ENCODE measurements at regions of chr12 and their contacts with region 1.

Region 1: GRCh38 chr12:133080368-133081158 is at the start of gene ZNF140:
- H3K4me3 Mint-ChIP-seq: no peak within 1 kb of the TSS
- H3K27ac Mint-ChIP-seq: no peak within 1 kb of the TSS
- H3K4me1 Mint-ChIP-seq: peaks cover 7% of the 10 kb centered on the region
- H3K27me3 Mint-ChIP-seq: no peaks in the 10 kb centered on the region

Region 2: DNA sequence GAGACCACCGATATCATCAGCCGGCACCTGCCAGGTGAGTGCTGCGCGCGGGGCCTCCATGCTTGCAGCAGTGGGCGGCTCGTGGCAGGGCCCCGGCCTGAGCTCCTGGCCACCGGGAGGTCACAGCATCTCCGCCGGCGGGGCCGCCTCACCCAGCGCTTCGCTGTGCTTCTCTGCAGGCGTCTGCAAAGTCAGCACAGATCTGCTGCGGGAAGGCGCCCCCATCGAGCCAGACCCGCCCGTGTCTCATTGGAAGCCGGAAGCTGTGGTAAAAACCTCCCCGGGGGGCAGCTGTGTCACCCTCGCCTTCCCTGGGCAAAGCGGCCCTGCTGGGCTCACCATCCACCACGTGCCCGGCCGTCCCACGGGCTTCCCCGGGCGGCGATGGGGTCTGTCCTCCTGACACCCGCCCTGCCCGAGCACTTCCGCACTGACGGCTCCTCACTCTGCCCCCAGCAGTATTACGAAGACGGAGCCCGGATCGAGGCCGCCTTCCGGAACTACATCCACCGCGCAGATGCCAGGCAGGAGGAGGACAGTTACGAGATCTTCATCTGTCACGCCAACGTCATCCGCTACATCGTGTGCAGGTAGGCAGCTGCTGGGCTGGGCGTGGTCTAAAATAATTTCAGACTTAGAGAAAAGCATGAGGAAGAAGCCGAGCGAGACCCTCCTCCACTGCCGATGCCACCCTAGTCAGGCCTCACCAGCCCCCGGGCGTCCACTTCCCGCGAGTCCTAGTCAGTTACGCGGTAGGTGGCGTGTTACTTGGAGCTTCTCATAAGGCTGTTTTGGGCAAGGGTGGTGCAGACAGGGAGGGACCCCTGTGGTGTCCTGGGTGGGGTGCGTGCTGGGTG is 362.8 kb before region 1 on chr12:
- intact Hi-C with region 1: no loop called
- H3K4me3 Mint-ChIP-seq: no peak overlapping the region
- H3K27ac Mint-ChIP-seq: no peak overlapping the region
- H3K4me1 Mint-ChIP-seq: peaks cover 8% of the 10 kb centered on the region
- H3K27me3 Mint-ChIP-seq: no peaks in the 10 kb centered on the region

Region 3: GRCh38 chr12:132887513-132888351 is 192.8 kb before region 1 on chr12 and contains the start of gene CHFR:
- intact Hi-C with region 1: loop called (anchors 1 kb)
- H3K4me3 Mint-ChIP-seq: peak within 1 kb of the TSS; percentile 91
- H3K27ac Mint-ChIP-seq: peak within 1 kb of the TSS; percentile 100
- H3K4me1 Mint-ChIP-seq: peaks cover 19% of the 10 kb centered on the region
- H3K27me3 Mint-ChIP-seq: peaks cover 15% of the 10 kb centered on the region

Region 4: GRCh38 chr12:132956011-132956788 is 124.4 kb before region 1 on chr12 and contains the start of gene ZNF605:
- intact Hi-C with region 1: loop called (anchors 1 kb)
- H3K4me3 Mint-ChIP-seq: peak within 1 kb of the TSS; percentile 86
- H3K27ac Mint-ChIP-seq: peak within 1 kb of the TSS; percentile 88
- H3K4me1 Mint-ChIP-seq: peaks cover 17% of the 10 kb centered on the region
- H3K27me3 Mint-ChIP-seq: no peaks in the 10 kb centered on the region

Region 5: GRCh38 chr12:132986001-132986912 is 94.3 kb before region 1 on chr12 and contains the start of gene ZNF26:
- intact Hi-C with region 1: loop called (anchors 1 kb)
- H3K4me3 Mint-ChIP-seq: peak within 1 kb of the TSS; percentile 89
- H3K27ac Mint-ChIP-seq: peak within 1 kb of the TSS; percentile 95
- H3K4me1 Mint-ChIP-seq: peaks cover 16% of the 10 kb centered on the region
- H3K27me3 Mint-ChIP-seq: no peaks in the 10 kb centered on the region

Region 6: GRCh38 chr12:133037207-133038005 is 43.2 kb before region 1 on chr12 and contains the start of gene ZNF84:
- intact Hi-C with region 1: loop called (anchors 1 kb)
- H3K4me3 Mint-ChIP-seq: peak within 1 kb of the TSS; percentile 90
- H3K27ac Mint-ChIP-seq: peak within 1 kb of the TSS; percentile 95
- H3K4me1 Mint-ChIP-seq: peaks cover 6% of the 10 kb centered on the region
- H3K27me3 Mint-ChIP-seq: no peaks in the 10 kb centered on the region

Region 7: GRCh38 chr12:133130038-133130807 is 49.7 kb after region 1 on chr12 and contains the starts of genes ZNF10 and ZNF891:
- intact Hi-C with region 1: loop called (anchors 1 kb)
- H3K4me3 Mint-ChIP-seq: peak within 1 kb of the TSS; percentile 92
- H3K27ac Mint-ChIP-seq: peak within 1 kb of the TSS; percentile 93
- H3K4me1 Mint-ChIP-seq: peaks cover 17% of the 10 kb centered on the region
- H3K27me3 Mint-ChIP-seq: peaks cover 2% of the 10 kb centered on the region

Region 8: GRCh38 chr12:133181238-133181959 is 100.8 kb after region 1 on chr12 and contains the start of gene ZNF268:
- intact Hi-C with region 1: loop called (anchors 1 kb)
- H3K4me3 Mint-ChIP-seq: peak within 1 kb of the TSS; percentile 91
- H3K27ac Mint-ChIP-seq: peak within 1 kb of the TSS; percentile 86
- H3K4me1 Mint-ChIP-seq: peaks cover 10% of the 10 kb centered on the region
- H3K27me3 Mint-ChIP-seq: no peaks in the 10 kb centered on the region